A673 (cell line): ENCODE measurements at regions of chr10 and their contacts with region 1.

Region 1: GRCh38 chr10:113454341-113455061 is 98.4 kb upstream of the HABP2 start:
- DNase-seq: peak; percentile 51
- H3K4me3 ChIP-seq: no peak overlapping the region
- H3K27ac ChIP-seq: no peak overlapping the region
- H3K4me1 ChIP-seq: no peaks in the 10 kb centered on the region
- H3K27me3 ChIP-seq: peaks cover 26% of the 10 kb centered on the region
- CTCF ChIP-seq: peak; percentile 89

Region 2: DNA sequence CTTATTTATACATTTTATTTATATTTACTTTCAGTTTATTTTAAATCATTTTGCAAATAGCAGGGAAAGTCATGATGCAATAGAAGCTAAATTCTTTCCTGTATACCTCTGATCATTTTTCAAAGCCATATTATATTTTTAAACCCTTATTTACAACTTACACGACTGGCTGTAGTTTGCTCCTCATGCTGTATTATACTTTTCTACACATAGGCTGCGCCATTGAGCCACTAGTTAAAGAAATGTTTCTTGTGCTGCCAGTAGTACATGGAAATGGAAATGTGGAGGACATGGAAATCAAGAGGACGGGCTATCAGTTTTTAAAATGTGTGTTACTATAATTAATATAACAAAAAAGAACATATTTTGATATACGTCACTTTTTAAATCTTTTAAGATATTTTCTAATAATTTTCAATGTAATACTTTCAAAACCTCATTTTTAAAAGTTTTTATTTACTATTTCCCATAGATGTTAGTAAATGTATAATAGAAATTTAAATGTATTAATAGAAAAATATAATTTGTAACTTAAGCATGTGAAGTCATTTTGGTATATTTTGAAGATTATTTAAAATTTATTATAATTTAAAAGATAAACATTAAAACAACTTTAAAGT is 889.0 kb before region 1 on chr10:
- CTCF ChIA-PET with region 1: no interaction called
- POLR2A ChIA-PET with region 1: no interaction called
- intact Hi-C with region 1: loop called (anchors 5 kb)
- DNase-seq: peak; percentile 79
- H3K4me3 ChIP-seq: no peak overlapping the region
- H3K27ac ChIP-seq: no peak overlapping the region
- H3K4me1 ChIP-seq: no peaks in the 10 kb centered on the region
- H3K27me3 ChIP-seq: no peaks in the 10 kb centered on the region
- CTCF ChIP-seq: peak; percentile 78

Region 3: DNA sequence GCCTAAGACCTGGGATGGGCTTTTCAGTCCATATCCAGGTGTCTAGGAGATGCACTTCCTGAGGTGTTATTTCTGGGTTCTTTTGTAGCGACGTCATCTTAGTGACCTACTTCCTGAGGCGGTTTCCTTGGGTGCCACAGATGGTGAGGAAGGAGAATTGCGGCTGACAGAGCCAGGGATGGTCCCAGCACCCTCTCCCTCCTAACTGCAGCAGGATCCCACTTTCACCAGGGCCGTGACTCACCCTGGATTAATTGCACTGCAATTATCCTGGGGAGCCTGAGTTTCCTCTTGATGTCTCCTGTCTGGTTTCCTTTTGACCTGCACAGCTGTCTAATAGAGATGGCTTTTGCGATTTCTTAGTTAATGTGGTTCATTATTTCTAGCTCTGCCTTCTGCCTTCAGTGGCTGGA is 232.7 kb before region 1 on chr10:
- CTCF ChIA-PET with region 1: no interaction called
- POLR2A ChIA-PET with region 1: no interaction called
- intact Hi-C with region 1: no loop called
- DNase-seq: peak; percentile 83
- H3K4me3 ChIP-seq: no peak overlapping the region
- H3K27ac ChIP-seq: no peak overlapping the region
- H3K4me1 ChIP-seq: peaks cover 7% of the 10 kb centered on the region
- H3K27me3 ChIP-seq: no peaks in the 10 kb centered on the region
- CTCF ChIP-seq: no peak

Region 4: DNA sequence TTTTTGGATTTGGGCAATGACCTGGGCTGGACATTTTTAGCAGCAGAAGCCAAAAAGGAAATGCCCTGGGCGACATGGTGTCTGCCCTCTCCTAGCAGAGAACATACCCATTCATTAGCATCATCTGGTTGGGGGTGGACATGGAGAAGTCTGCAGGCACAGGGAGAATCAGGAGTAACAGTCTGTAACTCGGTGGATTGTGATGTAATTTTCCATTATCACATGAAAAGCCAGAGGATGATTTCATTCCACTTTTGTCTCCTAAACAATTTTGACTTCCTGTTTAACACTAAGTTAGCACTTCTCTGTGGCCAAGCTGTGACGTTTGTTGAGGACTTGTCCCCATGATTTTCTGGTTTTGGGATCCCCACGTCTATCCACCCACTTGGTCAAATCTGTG is 55.4 kb before region 1 on chr10:
- CTCF ChIA-PET with region 1: no interaction called
- POLR2A ChIA-PET with region 1: no interaction called
- intact Hi-C with region 1: no loop called
- DNase-seq: peak; percentile 23
- H3K4me3 ChIP-seq: no peak overlapping the region
- H3K27ac ChIP-seq: no peak overlapping the region
- H3K4me1 ChIP-seq: peaks cover 8% of the 10 kb centered on the region
- H3K27me3 ChIP-seq: no peaks in the 10 kb centered on the region
- CTCF ChIP-seq: no peak

Region 5: GRCh38 chr10:113572520-113573290 is 118.2 kb after region 1 on chr10:
- CTCF ChIA-PET with region 1: no interaction called
- POLR2A ChIA-PET with region 1: no interaction called
- intact Hi-C with region 1: no loop called
- DNase-seq: no peak
- H3K4me3 ChIP-seq: no peak overlapping the region
- H3K27ac ChIP-seq: no peak overlapping the region
- H3K4me1 ChIP-seq: no peaks in the 10 kb centered on the region
- H3K27me3 ChIP-seq: no peaks in the 10 kb centered on the region
- CTCF ChIP-seq: no peak